Activated T-helper 2 cell treated with anti-CD3 and anti-CD28 coated beads, Interferon-gamma antibody, Interleukin-2, Interleukin-4, amounts not matched to agents 10 μg/mL and 5 μg/mL and 100 μg/mL, durations not matched to agents 14 hours and 24 hours and 36 hours (primary cell): ENCODE measurements at regions of chr6 and their contacts with region 1.

Region 1: DNA sequence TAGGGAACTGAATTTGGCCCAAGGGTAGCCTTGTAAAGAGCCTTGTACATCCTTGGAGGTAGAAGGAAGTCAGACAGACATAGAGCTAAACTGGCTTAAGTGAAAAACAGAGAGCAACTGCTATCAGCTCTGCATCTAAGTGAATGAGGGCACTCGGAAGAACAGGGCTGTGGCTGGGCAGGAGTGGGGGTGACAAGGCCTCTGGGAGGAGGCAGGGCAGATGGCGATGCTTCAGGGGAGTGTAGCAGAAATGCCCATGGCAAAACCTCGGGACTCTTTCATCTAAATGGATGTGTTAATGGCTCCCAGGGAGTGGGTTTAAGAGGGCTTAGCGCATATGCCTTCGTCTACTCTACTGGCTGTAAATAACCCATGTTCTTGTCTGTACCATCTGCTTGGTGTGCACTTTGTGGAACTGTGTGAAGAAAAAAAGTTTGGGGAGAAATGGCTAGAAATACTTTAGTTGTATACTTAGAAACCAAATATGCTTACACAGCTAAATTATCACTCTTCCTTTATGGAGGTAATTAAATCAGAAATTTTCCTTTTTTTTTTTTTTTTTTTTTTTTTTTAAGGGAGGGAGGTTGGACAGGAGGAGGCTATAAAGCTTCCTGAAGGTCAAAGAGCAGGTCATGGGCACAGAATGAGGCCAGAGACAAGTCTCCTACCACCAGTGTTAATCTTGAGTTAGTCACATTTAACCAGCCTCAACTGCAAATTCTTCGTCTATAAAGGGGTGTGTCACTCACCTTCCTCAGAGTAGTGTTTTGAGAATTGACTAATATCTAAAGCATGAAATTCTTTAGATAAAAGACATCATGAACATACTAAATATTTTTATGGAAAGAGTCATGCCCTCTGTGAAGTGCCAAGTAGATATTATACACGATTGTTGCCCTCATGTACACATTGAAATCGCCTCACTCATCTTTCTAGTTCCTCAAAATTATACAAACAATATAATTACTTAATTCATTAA is 60.9 kb downstream of the FYN start:
- DNase-seq: no peak
- H3K4me3 Mint-ChIP-seq: peak overlapping the region; percentile 13
- H3K27ac Mint-ChIP-seq: peak overlapping the region; percentile 88
- H3K4me1 Mint-ChIP-seq: peaks cover 71% of the 10 kb centered on the region
- H3K27me3 Mint-ChIP-seq: no peaks in the 10 kb centered on the region

Region 2: DNA sequence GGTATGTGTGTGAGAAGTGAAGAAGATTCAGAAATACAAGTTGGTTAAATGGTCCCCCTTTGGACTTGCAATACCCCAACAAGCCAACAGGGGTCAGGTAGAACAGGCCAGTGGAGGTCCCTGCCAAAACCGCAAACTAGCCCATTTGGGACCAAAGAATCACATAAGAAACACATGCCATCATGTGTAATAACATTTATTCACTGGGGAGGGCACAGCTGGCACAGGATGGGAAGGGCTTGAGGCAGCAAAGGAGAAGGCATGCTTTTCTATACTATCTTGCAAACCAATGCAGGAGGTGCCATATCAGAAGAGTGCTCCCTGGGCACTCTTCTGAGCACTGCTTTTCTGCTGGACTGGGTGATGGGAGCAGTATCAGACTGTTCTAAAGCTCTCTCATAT is 90.6 kb before region 1 on chr6:
- intact Hi-C with region 1: no loop called
- DNase-seq: peak; percentile 36
- H3K4me3 Mint-ChIP-seq: no peak overlapping the region
- H3K27ac Mint-ChIP-seq: no peak overlapping the region
- H3K4me1 Mint-ChIP-seq: peaks cover 54% of the 10 kb centered on the region
- H3K27me3 Mint-ChIP-seq: no peaks in the 10 kb centered on the region

Region 3: DNA sequence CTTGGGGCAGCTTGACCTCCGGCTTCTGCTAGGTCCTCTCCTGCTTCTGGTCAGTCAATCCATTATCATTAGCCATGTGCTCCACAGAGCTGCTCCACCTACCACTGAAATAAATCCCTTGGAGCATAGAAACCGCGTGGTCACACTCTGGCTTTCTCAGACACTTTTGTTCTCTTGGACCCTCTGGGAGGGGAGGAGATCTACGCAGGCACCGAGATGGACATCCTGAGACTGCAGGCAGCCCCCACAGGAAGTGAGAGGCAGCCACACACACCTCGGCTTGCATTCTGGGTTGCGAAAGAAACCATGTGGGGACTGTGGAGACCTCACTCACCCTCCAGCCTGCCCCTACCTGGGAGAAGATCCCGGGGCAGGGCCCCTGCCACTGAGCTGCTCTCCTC is 18.6 kb before region 1 on chr6:
- intact Hi-C with region 1: loop called (anchors 2 kb)
- DNase-seq: no peak
- H3K4me3 Mint-ChIP-seq: peak overlapping the region; percentile 63
- H3K27ac Mint-ChIP-seq: peak overlapping the region; percentile 94
- H3K4me1 Mint-ChIP-seq: peaks cover 71% of the 10 kb centered on the region
- H3K27me3 Mint-ChIP-seq: no peaks in the 10 kb centered on the region

Region 4: GRCh38 chr6:111823831-111824607 is 11.7 kb after region 1 on chr6:
- intact Hi-C with region 1: loop called (anchors 1 kb)
- DNase-seq: no peak
- H3K4me3 Mint-ChIP-seq: peak overlapping the region; percentile 66
- H3K27ac Mint-ChIP-seq: peak overlapping the region; percentile 89
- H3K4me1 Mint-ChIP-seq: peaks cover 68% of the 10 kb centered on the region
- H3K27me3 Mint-ChIP-seq: no peaks in the 10 kb centered on the region